SK-N-SH (cell line): ENCODE measurements at regions of chr6 and their contacts with region 1.

Region 1: DNA sequence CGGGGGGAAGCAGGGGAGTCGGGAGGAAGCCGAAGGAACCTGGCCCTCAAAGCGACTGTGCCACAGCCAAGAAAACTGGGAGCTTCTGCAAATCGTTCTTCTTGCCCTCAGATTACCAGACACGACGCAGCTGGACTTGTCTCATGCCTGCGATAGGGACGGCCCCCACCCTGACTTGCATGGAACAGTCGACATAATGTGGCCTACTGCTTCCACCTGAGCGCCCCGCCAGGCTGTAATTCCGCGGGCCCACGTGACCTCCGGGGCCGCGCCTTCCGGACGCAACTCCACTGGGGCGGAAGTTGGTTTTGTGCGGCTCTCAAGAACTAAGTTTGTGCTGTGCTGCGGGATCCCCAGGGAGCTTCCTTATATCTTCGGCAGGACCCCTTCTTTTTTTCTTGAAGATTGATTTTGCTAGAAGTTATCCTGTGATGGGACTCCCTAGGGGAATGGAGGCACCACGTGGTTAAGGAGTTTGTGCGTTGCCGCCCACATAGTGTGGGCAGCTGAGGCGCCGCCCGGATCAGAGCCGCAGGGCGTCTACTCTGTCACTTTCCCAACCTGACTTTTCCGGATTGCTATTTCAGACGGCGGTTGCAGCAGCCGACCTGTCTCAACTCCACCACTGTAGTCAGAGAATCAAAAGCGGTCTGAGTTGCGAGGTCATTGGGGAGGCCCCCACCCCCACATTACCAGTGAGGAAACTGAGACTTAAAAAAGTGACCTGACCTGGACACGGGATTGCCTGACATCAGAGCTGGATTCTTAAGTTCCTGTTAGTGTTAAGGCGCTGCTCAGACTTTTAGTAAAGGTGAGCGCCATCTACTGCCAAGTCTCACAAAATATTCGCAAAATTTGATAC is 540 bp upstream of the CD164 start:
- DNase-seq: peak; percentile 92
- H3K4me3 ChIP-seq: peak overlapping the region; percentile 86 to 95
- H3K27ac ChIP-seq: peak overlapping the region; percentile 96 to 100
- H3K4me1 ChIP-seq: peaks cover 10 to 15% of the 10 kb centered on the region in 2 experiments; a peak in 2 of 4 replicates
- H3K27me3 ChIP-seq: no peaks in the 10 kb centered on the region
- CTCF ChIP-seq: peak; percentile 72
- EP300 ChIP-seq: no peak; a peak in 1 of 4 replicates
- RAD21 ChIP-seq: peak; percentile 76

Region 2: GRCh38 chr6:109094363-109095026 is 288.3 kb before region 1 on chr6 and contains the start of gene SESN1:
- CTCF ChIA-PET with region 1: interaction called, 9 read pairs
- POLR2A ChIA-PET with region 1: interaction called, 10 read pairs
- DNase-seq: peak; percentile 97
- H3K4me3 ChIP-seq: peak within 1 kb of the TSS; percentile 96
- H3K27ac ChIP-seq: peak within 1 kb of the TSS; percentile 99
- H3K4me1 ChIP-seq: peaks cover 5 to 15% of the 10 kb centered on the region in 2 experiments; a peak in 2 of 4 replicates
- H3K27me3 ChIP-seq: no peaks in the 10 kb centered on the region
- CTCF ChIP-seq: no peak
- EP300 ChIP-seq: peak in 1 of 2 experiments; percentile 39; a peak in 2 of 4 replicates
- RAD21 ChIP-seq: no peak
- polyA plus RNA-seq, gene SESN1: 13.1 and 18.8 TPM in 2 replicates

Region 3: DNA sequence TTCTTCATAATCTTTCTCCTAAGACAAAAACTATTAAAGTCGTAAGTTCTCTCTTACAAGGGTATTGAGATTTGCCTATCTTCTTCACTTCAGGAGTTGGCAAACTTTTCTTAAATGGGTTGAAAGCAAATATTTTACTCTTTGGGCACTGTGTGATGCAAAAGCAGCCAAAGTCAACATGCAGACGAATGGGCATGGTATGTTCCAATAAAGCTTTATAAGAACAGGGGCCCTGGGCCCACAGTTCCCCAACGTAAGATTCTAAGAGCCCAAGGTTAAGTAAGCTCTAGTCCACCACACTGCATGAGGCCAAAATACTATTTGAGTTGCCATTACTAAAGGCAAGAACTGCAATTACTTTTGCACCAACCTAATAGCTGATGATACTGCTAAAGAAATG is 12.0 kb before region 1 on chr6:
- CTCF ChIA-PET with region 1: interaction called, 11 read pairs
- POLR2A ChIA-PET with region 1: no interaction called
- DNase-seq: no peak
- H3K4me3 ChIP-seq: no peak overlapping the region
- H3K27ac ChIP-seq: no peak overlapping the region
- H3K4me1 ChIP-seq: no peaks in the 10 kb centered on the region; a peak in 2 of 4 replicates
- H3K27me3 ChIP-seq: no peaks in the 10 kb centered on the region
- CTCF ChIP-seq: no peak
- EP300 ChIP-seq: no peak
- RAD21 ChIP-seq: no peak

Region 4: DNA sequence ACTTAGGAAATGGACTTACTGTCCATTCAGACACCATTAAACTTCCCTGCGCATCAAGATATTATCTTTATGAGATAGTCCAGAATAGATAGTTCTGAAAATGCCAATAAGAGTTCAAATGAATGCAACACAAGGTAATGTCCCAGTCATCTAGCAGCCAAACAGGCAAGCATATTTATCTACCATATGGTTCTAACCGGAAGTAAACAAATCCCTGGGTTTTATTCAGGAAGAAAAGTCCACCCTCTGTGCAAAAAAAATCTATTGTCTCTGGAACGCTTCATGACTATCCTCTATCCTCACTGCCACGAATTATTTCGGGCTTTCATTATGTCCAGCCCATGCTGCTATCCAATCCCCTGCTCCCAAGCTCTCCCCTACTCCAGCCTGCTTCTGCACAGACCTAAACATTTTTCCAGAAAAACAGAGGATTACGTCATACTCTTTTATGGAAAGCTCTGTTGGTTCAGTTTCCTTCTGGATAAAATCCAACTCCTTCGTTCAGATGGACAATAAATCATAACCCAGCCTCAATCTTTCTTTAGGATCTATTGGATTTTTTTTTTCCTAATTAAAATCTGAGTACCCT is 46.2 kb after region 1 on chr6:
- CTCF ChIA-PET with region 1: interaction called, 10 read pairs
- POLR2A ChIA-PET with region 1: no interaction called
- DNase-seq: no peak
- H3K4me3 ChIP-seq: no peak overlapping the region
- H3K27ac ChIP-seq: no peak overlapping the region
- H3K4me1 ChIP-seq: peaks cover 0 to 3% of the 10 kb centered on the region in 2 experiments; a peak in 1 of 4 replicates
- H3K27me3 ChIP-seq: no peaks in the 10 kb centered on the region
- CTCF ChIP-seq: no peak
- EP300 ChIP-seq: no peak
- RAD21 ChIP-seq: no peak

Region 5: DNA sequence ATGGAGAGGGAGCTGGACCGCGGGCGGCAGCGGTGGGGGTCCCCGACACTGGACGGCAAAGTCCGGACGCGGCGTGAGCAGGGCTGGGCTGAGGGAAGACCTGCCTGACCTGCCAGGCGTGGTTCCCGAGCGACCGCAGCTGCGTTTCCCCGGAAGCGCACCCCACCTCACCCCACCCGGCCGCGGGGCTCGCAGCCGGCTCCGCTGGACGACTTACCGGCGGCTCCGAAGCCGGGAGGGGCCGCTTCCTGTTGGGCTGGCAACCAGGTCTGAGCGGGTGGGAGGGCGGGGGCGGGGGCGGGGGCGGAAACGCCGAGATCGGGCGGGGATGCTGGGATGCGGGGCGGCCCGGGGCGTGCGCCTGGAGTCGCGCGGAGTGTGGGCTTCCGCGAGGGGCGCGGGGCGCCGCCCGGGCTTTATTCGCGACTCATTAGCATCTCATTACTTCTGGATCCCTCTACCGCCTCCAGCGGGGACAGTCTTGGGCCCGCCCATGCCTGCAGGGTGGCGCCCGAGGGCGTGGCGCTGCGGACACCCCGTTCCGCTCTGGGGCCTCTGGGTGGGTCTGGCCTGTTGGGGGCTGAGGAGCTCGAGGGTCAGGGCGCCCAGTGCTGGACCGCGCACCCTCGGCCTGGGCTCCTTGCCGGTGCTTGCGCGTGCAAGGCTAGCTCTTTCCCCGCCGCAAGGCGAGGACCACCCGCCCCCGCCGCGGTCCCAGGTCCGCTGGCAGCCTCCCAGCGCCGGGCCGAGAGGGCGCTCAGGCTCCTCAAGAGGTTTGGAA is 72.9 kb after region 1 on chr6 and contains the start of gene MICAL1:
- CTCF ChIA-PET with region 1: interaction called, 23 read pairs
- POLR2A ChIA-PET with region 1: interaction called, 3 read pairs
- DNase-seq: peak; percentile 94
- H3K4me3 ChIP-seq: peak within 1 kb of the TSS; percentile 80 to 97
- H3K27ac ChIP-seq: peak within 1 kb of the TSS; percentile 51 to 90
- H3K4me1 ChIP-seq: peaks cover 0 to 25% of the 10 kb centered on the region in 2 experiments; a peak in 3 of 4 replicates
- H3K27me3 ChIP-seq: no peaks in the 10 kb centered on the region
- CTCF ChIP-seq: peak; percentile 40
- EP300 ChIP-seq: no peak
- RAD21 ChIP-seq: no peak
- polyA plus RNA-seq, gene MICAL1: 45.6 and 56.3 TPM in 2 replicates